Motor neuron (in vitro differentiated cells): ENCODE measurements at regions of chr15 and their contacts with region 1.

Region 1: DNA sequence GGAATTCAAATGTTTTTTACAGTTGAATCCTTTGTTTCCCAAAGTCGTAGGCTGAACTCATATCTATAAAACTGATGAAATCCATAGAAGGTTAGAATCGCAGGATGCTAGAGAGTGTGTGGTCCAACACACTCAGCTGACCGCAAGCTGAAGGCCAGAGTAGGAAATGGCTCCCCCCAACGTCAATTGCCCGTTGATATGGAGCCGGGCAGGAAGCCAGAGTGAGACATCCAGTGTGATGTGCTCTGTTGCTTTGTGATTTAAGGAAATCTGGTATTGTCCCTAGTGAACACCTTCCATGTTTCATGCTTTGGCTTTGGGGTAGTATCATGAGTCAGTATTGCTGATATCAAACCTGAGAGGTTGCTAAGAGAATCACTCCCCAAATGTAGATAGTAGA is 5.8 kb upstream of the MEX3B start:
- ATAC-seq: no peak
- H3K4me3 ChIP-seq: no peak overlapping the region
- H3K27ac ChIP-seq: no peak overlapping the region
- H3K4me1 ChIP-seq: peaks cover under 1 to 12% of the 10 kb centered on the region in 2 donors

Region 2: DNA sequence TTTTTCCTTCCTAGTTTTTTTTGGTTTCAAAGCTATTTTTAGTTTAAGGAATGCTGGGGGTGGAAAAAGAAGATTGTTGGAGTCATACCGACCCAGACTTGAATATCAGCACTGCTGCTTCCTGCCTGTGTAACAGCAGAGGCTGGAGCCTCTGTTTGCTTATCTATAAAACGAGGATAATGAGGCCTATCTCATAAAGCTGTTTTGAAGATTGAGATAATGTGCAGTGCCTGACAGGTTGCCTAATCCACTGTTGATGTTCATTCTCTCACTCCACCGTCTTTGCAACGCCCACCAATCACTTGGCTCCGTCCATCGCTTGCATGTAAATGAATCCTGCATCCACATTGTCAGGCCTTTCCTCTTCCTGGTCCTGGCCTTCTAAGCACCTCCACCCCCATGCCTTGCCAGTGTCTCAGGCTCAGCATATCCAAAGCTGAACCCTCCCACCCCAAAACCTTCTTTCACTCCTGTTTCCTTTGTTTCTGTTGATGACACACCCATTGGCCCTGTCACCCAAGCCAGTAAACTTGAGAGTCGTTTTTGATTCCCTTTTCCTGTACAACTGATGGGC is 100.7 kb before region 1 on chr15:
- in situ Hi-C with region 1: loop called in 1 of 9 experiments (anchors 25 kb)
- ATAC-seq: no peak
- H3K4me3 ChIP-seq: no peak overlapping the region
- H3K27ac ChIP-seq: no peak overlapping the region
- H3K4me1 ChIP-seq: peaks cover 2 to 7% of the 10 kb centered on the region in 2 donors

Region 3: GRCh38 chr15:82272154-82272553 is 220.5 kb after region 1 on chr15:
- in situ Hi-C with region 1: no loop called
- ATAC-seq: no peak
- H3K4me3 ChIP-seq: no peak overlapping the region
- H3K27ac ChIP-seq: no peak overlapping the region
- H3K4me1 ChIP-seq: peaks cover 0 to 9% of the 10 kb centered on the region in 2 donors